ENCODE measurements at regions of chr9 and their contacts with region 1.

Region 1: DNA sequence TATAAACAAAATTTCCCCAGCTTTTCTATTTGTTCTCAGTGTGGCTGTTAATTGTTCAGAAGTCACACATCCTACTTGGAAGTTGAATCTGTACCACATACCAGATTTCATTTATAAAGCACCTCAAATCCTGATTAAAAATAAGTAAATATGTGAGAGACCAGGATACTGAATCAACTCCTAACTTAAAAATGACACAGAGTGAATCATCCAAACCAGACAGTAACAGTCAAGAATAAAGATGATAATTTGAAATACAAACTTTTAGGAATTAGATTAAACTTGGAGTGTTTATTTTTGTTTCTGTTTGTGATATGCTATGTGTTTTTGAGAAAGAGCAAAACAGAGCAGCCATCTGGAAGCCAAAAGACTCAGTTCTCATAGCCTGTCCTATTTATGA is 633.2 kb upstream of the RORB start:
- DNase-seq: no peak
- H3K4me3 Mint-ChIP-seq: no peak overlapping the region
- H3K27ac Mint-ChIP-seq: no peak overlapping the region
- H3K4me1 Mint-ChIP-seq: peaks cover 3% of the 10 kb centered on the region
- H3K27me3 Mint-ChIP-seq: peaks cover 80% of the 10 kb centered on the region
- CTCF ChIP-seq: no peak

Region 2: DNA sequence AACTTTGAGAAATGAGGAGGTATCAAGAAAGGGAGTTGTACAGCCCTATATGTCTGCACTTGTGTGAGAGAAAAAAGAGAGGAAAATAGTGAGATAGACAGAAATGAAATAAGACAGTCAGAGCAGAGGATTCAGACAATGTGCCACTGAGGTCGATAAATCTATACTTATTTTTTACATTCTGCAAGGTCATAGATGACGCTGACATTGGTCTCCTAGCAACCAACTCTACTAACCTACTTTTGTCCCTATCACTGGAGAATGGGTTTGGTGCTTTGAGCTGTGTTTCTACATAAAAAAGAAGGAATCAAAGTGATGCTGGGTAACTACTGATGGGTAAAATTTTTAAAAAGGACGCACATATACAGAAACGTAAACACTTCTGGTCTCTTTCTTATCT is 59.9 kb after region 1 on chr9:
- CTCF ChIA-PET with region 1: no interaction called
- POLR2A ChIA-PET with region 1: interaction called, 3 read pairs
- intact Hi-C with region 1: loop called (anchors 2 kb)
- DNase-seq: no peak
- H3K4me3 Mint-ChIP-seq: no peak overlapping the region
- H3K27ac Mint-ChIP-seq: no peak overlapping the region
- H3K4me1 Mint-ChIP-seq: no peaks in the 10 kb centered on the region
- H3K27me3 Mint-ChIP-seq: peaks cover 42% of the 10 kb centered on the region
- CTCF ChIP-seq: no peak